PC-3 (cell line): ENCODE measurements at regions of chr3 and their contacts with region 1.

Region 1: GRCh38 chr3:102460579-102460978 is 25.8 kb downstream of the ZPLD1 start:
- DNase-seq: peak; percentile 86
- ATAC-seq: peak; percentile 90
- H3K4me3 ChIP-seq: no peak overlapping the region
- H3K27ac ChIP-seq: peak overlapping the region; percentile 26
- H3K4me1 ChIP-seq: peaks cover 24% of the 10 kb centered on the region
- H3K27me3 ChIP-seq: no peaks in the 10 kb centered on the region
- CTCF ChIP-seq: no peak

Region 2: DNA sequence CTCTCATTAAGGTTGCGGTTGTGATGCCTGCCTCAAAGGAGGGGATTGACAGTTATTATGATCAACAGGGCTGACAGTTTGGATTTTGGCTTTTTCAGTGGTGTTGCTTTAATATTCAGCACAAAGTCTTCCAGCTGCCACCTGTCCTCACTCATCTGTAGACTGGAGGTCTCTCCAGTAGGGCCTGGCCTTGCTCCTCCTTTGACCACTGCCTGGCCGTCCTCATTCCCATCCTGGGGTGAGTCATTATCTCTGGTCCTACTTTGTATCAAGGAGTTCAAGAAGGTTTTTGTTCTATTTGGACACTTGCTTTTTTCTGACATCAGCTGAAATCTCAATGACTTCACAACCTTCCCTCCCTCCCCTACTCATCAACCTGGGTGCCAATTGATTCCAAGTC is 120.9 kb before region 1 on chr3:
- CTCF ChIA-PET with region 1: no interaction called
- POLR2A ChIA-PET with region 1: no interaction called
- intact Hi-C with region 1: no loop called
- DNase-seq: no peak
- ATAC-seq: no peak
- H3K4me3 ChIP-seq: no peak overlapping the region
- H3K27ac ChIP-seq: no peak overlapping the region
- H3K4me1 ChIP-seq: peaks cover 10% of the 10 kb centered on the region
- H3K27me3 ChIP-seq: no peaks in the 10 kb centered on the region
- CTCF ChIP-seq: no peak

Region 3: DNA sequence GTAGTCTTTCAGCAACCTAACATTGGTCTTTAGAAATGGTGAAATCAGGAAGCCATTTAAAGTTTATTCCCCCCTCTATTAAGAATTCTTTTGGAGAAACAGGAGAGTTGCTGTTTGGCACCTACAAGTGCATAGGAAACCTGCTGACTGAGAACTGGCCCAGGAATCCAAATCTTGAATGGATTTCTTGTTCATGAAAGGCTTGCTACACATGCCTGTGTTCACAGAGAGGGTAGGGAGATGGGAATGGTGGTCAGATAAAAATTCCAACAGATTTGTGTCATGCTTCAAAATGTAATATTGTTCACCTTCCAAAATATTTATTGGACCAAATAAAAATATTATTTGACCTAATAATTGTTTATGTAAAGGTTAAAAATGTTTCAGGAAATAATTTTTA is 50.0 kb before region 1 on chr3:
- CTCF ChIA-PET with region 1: interaction called, 4 read pairs
- POLR2A ChIA-PET with region 1: no interaction called
- intact Hi-C with region 1: loop called (anchors 5 kb)
- DNase-seq: peak; percentile 53
- ATAC-seq: peak; percentile 90
- H3K4me3 ChIP-seq: no peak overlapping the region
- H3K27ac ChIP-seq: no peak overlapping the region
- H3K4me1 ChIP-seq: peaks cover 10% of the 10 kb centered on the region
- H3K27me3 ChIP-seq: no peaks in the 10 kb centered on the region
- CTCF ChIP-seq: no peak

Region 4: DNA sequence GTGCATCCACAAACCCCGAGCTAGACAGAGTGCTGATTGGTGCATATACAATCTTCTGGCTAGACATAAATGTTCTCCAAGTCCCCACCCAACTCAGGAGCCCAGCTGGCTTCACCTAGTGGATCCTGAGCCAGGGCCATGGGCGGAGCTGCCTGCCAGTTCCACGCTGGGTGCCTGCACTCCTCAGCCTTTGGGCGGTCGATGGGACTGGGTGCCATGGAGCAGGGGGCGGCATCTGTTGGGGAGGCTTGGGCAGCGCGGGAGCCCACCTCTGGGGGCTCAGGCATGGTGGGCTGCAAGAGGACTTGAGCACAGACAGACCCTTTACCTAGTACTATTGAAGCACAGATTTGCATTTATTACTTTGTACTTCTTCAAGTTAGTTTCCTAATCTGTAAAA is 31.7 kb after region 1 on chr3:
- CTCF ChIA-PET with region 1: no interaction called
- POLR2A ChIA-PET with region 1: no interaction called
- intact Hi-C with region 1: no loop called
- DNase-seq: no peak
- ATAC-seq: no peak
- H3K4me3 ChIP-seq: no peak overlapping the region
- H3K27ac ChIP-seq: no peak overlapping the region
- H3K4me1 ChIP-seq: no peaks in the 10 kb centered on the region
- H3K27me3 ChIP-seq: no peaks in the 10 kb centered on the region
- CTCF ChIP-seq: no peak

Region 5: DNA sequence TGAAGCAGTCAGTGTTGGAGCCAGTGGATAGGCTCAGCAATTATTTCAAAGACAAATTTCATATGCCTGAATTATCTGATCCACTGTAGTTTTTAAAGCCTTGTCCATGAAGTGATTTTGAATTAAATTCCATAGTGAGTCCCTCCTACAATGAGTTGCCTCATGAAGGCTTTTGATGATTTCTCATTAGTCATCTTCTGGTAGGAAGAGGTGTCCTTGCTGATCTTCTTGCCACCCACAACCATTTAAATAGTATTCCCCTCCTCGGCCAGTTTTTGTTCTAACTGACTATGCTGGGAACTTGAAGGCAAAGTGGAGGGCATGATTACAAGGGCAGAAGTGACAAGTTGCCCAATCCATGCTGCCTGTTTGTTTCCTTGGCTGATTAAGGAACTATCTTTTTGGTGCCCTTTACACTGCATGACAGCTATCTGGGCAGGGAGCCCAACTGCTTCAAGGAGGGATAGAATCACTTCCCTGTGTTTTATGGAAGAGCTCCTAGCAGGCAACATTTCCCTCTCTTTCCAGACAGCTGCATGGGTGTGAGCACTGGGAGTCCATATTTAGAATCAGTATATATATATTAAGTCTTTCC is 591.8 kb after region 1 on chr3:
- CTCF ChIA-PET with region 1: no interaction called
- POLR2A ChIA-PET with region 1: no interaction called
- intact Hi-C with region 1: no loop called
- DNase-seq: no peak
- ATAC-seq: peak; percentile 35; the same call in 1 of the 2 replicates
- H3K4me3 ChIP-seq: no peak overlapping the region
- H3K27ac ChIP-seq: no peak overlapping the region
- H3K4me1 ChIP-seq: no peaks in the 10 kb centered on the region
- H3K27me3 ChIP-seq: peaks cover 5% of the 10 kb centered on the region; the same call in 1 of the 2 replicates
- CTCF ChIP-seq: no peak